Activated CD4-positive, alpha-beta T cell treated with anti-CD3 and anti-CD28 coated beads for 36 hours (primary cell): ENCODE measurements at regions of chr19 and their contacts with region 1.

Region 1: DNA sequence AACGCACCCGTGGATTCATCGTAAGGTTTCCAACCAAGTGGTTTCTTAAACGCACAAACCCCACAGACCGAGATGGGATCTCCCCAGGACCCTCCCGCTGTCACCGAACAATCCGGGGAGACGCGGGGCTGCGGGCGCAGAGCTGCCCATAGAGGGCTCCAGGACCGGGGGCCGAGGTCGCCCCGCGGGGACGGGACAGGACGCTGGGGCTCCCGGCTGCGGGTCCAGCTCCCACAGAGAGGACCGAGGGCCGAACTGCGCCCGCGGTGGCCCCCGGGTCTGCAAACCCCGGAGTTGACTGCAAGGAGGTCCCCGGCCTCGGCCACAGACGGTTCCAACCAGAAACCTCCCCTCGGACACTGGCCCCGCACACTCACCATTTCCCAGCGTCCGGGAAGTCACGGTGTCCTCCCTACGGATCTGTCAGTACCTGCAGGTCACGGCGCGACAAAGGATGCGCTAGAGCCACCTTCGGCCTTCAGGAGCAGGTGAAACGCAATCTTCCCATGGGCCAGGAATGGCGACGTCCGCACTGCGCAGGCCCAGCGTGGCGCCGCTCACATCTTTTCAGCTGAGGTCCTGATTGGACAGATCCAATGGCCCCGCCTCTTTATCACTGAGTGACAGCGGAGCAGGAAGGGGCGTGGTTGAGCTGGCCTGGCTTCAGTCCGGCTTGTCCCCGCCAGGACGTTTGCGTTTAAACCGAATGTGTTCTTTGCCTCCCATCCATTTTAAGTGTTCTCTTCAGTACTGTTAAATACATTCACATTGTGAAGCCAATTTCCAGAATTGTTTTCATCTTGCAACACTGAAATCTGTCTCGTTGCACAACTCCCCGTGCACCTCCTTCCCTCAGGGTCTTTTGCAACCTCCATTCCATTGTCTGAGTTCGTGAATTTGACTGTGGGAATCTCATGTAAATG is at the start of gene ZNF14:
- DNase-seq: peak; percentile 96
- ATAC-seq: peak; percentile 100
- H3K4me3 Mint-ChIP-seq: peak within 1 kb of the TSS; percentile 85
- H3K27ac Mint-ChIP-seq: peak within 1 kb of the TSS; percentile 87
- H3K4me1 Mint-ChIP-seq: peaks cover 20% of the 10 kb centered on the region
- H3K27me3 Mint-ChIP-seq: no peaks in the 10 kb centered on the region
- total RNA-seq, gene ZNF14: 9.2 TPM

Region 2: GRCh38 chr19:19515764-19516519 is 216.9 kb before region 1 on chr19 and contains the start of gene NDUFA13:
- CTCF ChIA-PET with region 1: no interaction called
- POLR2A ChIA-PET with region 1: no interaction called
- intact Hi-C with region 1: loop called in 1 of 2 experiments (anchors 2 kb)
- DNase-seq: peak; percentile 95
- ATAC-seq: peak; percentile 94
- H3K4me3 Mint-ChIP-seq: peak within 1 kb of the TSS; percentile 83
- H3K27ac Mint-ChIP-seq: peak within 1 kb of the TSS; percentile 92
- H3K4me1 Mint-ChIP-seq: peaks cover 25% of the 10 kb centered on the region
- H3K27me3 Mint-ChIP-seq: no peaks in the 10 kb centered on the region
- total RNA-seq, gene NDUFA13: 310 to 323 TPM

Region 3: GRCh38 chr19:19696386-19696785 is 36.5 kb before region 1 on chr19:
- CTCF ChIA-PET with region 1: no interaction called
- POLR2A ChIA-PET with region 1: no interaction called
- intact Hi-C with region 1: no loop called
- DNase-seq: no peak
- ATAC-seq: no peak
- H3K4me3 Mint-ChIP-seq: no peak overlapping the region
- H3K27ac Mint-ChIP-seq: no peak overlapping the region
- H3K4me1 Mint-ChIP-seq: no peaks in the 10 kb centered on the region
- H3K27me3 Mint-ChIP-seq: no peaks in the 10 kb centered on the region

Region 4: GRCh38 chr19:19776041-19777008 is 43.5 kb after region 1 on chr19:
- CTCF ChIA-PET with region 1: no interaction called
- POLR2A ChIA-PET with region 1: interaction called, 8 read pairs
- intact Hi-C with region 1: loop called (anchors 1 kb)
- DNase-seq: peak; percentile 96
- ATAC-seq: peak; percentile 99
- H3K4me3 Mint-ChIP-seq: peak overlapping the region; percentile 98
- H3K27ac Mint-ChIP-seq: peak overlapping the region; percentile 85
- H3K4me1 Mint-ChIP-seq: peaks cover 37% of the 10 kb centered on the region
- H3K27me3 Mint-ChIP-seq: no peaks in the 10 kb centered on the region

Region 5: GRCh38 chr19:19865739-19866481 is 133.1 kb after region 1 on chr19 and contains the start of gene ZNF253:
- CTCF ChIA-PET with region 1: interaction called, 3 read pairs
- POLR2A ChIA-PET with region 1: no interaction called
- intact Hi-C with region 1: loop called (anchors 1 to 2 kb)
- DNase-seq: peak; percentile 98
- ATAC-seq: peak; percentile 93
- H3K4me3 Mint-ChIP-seq: peak within 1 kb of the TSS; percentile 88
- H3K27ac Mint-ChIP-seq: peak within 1 kb of the TSS; percentile 98
- H3K4me1 Mint-ChIP-seq: peaks cover 21% of the 10 kb centered on the region
- H3K27me3 Mint-ChIP-seq: no peaks in the 10 kb centered on the region
- total RNA-seq, gene ZNF253: 16.1 to 25.1 TPM

Region 6: GRCh38 chr19:19956434-19957075 is 223.7 kb after region 1 on chr19:
- CTCF ChIA-PET with region 1: interaction called, 4 read pairs
- POLR2A ChIA-PET with region 1: no interaction called
- intact Hi-C with region 1: loop called in 1 of 2 experiments (anchors 2 kb)
- DNase-seq: peak; percentile 24
- ATAC-seq: no peak
- H3K4me3 Mint-ChIP-seq: no peak overlapping the region
- H3K27ac Mint-ChIP-seq: no peak overlapping the region
- H3K4me1 Mint-ChIP-seq: no peaks in the 10 kb centered on the region
- H3K27me3 Mint-ChIP-seq: no peaks in the 10 kb centered on the region

Region 7: GRCh38 chr19:20423381-20424197 is 690.7 kb after region 1 on chr19:
- CTCF ChIA-PET with region 1: no interaction called
- POLR2A ChIA-PET with region 1: no interaction called
- intact Hi-C with region 1: loop called in 1 of 2 experiments (anchors 5 kb)
- DNase-seq: peak; percentile 61
- ATAC-seq: no peak
- H3K4me3 Mint-ChIP-seq: peak overlapping the region; percentile 96
- H3K27ac Mint-ChIP-seq: peak overlapping the region; percentile 99
- H3K4me1 Mint-ChIP-seq: peaks cover 9% of the 10 kb centered on the region
- H3K27me3 Mint-ChIP-seq: no peaks in the 10 kb centered on the region